B cell (primary cell): ENCODE measurements at regions of chr6 and their contacts with region 1.

Region 1: GRCh38 chr6:53484476-53485280 is 60.2 kb downstream of the GCLC start:
- DNase-seq: peak; percentile 86
- ATAC-seq: peak; percentile 76
- H3K4me3 ChIP-seq: peak overlapping the region in 1 of 5 experiments; percentile 0
- H3K4me3 Mint-ChIP-seq: peak overlapping the region; percentile 13
- H3K27ac ChIP-seq: no peak overlapping the region
- H3K27ac Mint-ChIP-seq: peak overlapping the region; percentile 6
- H3K4me1 ChIP-seq: peaks cover 42 to 46% of the 10 kb centered on the region in 2 donors
- H3K4me1 Mint-ChIP-seq: peaks cover 58% of the 10 kb centered on the region
- H3K27me3 ChIP-seq: peaks cover 0 to 2% (median 0%) of the 10 kb centered on the region in 4 experiments
- H3K27me3 Mint-ChIP-seq: peaks cover 16% of the 10 kb centered on the region
- CTCF ChIP-seq: peak; percentile 99

Region 2: GRCh38 chr6:52995913-52996645 is 488.6 kb before region 1 on chr6:
- CTCF ChIA-PET with region 1: interaction called, 5 read pairs
- POLR2A ChIA-PET with region 1: no interaction called
- intact Hi-C with region 1: loop called (anchors 10 kb)
- DNase-seq: peak; percentile 76
- ATAC-seq: no peak
- H3K4me3 ChIP-seq: peak overlapping the region; percentile 14 to 58 (median 47)
- H3K4me3 Mint-ChIP-seq: peak overlapping the region; percentile 98
- H3K27ac ChIP-seq: peak overlapping the region; percentile 43 to 95
- H3K27ac Mint-ChIP-seq: peak overlapping the region; percentile 100
- H3K4me1 ChIP-seq: peaks cover 8 to 14% of the 10 kb centered on the region in 2 donors
- H3K4me1 Mint-ChIP-seq: peaks cover 23% of the 10 kb centered on the region
- H3K27me3 ChIP-seq: no peaks in the 10 kb centered on the region
- H3K27me3 Mint-ChIP-seq: peaks cover 4% of the 10 kb centered on the region
- CTCF ChIP-seq: no peak

Region 3: DNA sequence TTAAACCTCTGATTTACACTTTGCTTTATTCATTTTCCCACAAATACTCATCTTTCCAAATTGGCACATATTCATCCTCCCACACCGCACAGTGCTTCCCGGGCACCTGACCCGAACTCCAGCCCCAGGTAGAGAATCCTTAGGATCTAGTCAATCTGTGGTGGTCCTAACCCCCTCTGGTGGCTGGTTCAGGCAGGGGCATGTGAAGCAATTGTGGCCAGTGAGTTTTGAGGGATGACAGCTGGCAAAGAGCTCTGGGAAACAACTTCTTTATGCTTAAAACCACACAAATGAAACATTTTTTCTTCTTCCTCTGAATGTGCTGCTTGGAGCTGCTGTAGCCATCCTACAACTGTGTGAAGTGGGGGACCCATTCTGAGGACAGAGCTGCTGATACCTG is 190.6 kb before region 1 on chr6:
- CTCF ChIA-PET with region 1: interaction called, 25 read pairs
- POLR2A ChIA-PET with region 1: no interaction called
- intact Hi-C with region 1: loop called (anchors 1 kb)
- DNase-seq: peak; percentile 60
- ATAC-seq: peak; percentile 39
- H3K4me3 ChIP-seq: no peak overlapping the region
- H3K4me3 Mint-ChIP-seq: no peak overlapping the region
- H3K27ac ChIP-seq: peak overlapping the region; percentile 37 to 81
- H3K27ac Mint-ChIP-seq: peak overlapping the region; percentile 90
- H3K4me1 ChIP-seq: peaks cover 86 to 93% of the 10 kb centered on the region in 2 donors
- H3K4me1 Mint-ChIP-seq: peaks cover 87% of the 10 kb centered on the region
- H3K27me3 ChIP-seq: no peaks in the 10 kb centered on the region
- H3K27me3 Mint-ChIP-seq: no peaks in the 10 kb centered on the region
- CTCF ChIP-seq: peak; percentile 83

Region 4: GRCh38 chr6:53369876-53370515 is 114.7 kb before region 1 on chr6:
- CTCF ChIA-PET with region 1: no interaction called
- POLR2A ChIA-PET with region 1: no interaction called
- intact Hi-C with region 1: no loop called
- DNase-seq: no peak
- ATAC-seq: no peak
- H3K4me3 ChIP-seq: no peak overlapping the region
- H3K4me3 Mint-ChIP-seq: no peak overlapping the region
- H3K27ac ChIP-seq: no peak overlapping the region
- H3K27ac Mint-ChIP-seq: no peak overlapping the region
- H3K4me1 ChIP-seq: no peaks in the 10 kb centered on the region
- H3K4me1 Mint-ChIP-seq: no peaks in the 10 kb centered on the region
- H3K27me3 ChIP-seq: no peaks in the 10 kb centered on the region
- H3K27me3 Mint-ChIP-seq: no peaks in the 10 kb centered on the region
- CTCF ChIP-seq: no peak

Region 5: DNA sequence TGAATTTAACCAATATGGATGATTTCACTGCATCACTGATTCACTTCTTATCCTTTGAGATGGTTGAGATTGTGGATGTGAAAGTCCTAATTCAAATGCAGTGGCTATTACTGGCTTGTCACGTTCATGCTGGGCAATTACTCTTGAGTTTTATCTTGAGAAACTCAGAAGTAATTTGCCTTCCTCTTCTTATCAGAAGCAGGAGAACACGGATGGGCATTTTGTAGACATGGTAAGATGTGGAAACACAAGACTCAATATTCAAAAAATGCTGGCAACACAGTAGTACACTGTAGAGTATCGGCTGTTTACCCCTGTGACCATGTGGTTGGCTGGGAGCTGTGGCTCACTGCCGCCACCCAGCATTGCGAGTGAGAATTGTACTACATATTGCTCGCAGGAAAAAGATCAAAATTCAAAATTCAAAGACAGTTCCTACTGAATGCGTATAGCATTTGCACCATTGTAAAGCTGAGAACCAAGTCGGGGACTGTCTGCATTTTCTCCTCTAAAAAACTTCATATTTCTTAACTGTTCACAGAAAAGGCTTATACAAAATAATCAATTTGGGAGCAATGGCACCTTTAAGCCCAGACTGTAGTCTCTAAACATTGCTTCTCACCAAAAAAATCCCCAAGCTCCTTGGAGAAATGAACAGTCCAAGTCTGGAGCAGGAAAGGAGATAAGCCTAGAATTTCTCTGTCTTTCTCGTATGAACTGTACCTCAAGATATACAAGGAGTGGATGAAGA is 74.0 kb before region 1 on chr6:
- CTCF ChIA-PET with region 1: interaction called, 89 read pairs
- POLR2A ChIA-PET with region 1: no interaction called
- intact Hi-C with region 1: loop called (anchors 1 kb)
- DNase-seq: peak; percentile 77
- ATAC-seq: peak; percentile 98
- H3K4me3 ChIP-seq: peak overlapping the region in 2 of 5 experiments; percentile 7 to 39
- H3K4me3 Mint-ChIP-seq: peak overlapping the region; percentile 74
- H3K27ac ChIP-seq: peak overlapping the region; percentile 7 to 46
- H3K27ac Mint-ChIP-seq: peak overlapping the region; percentile 65
- H3K4me1 ChIP-seq: peaks cover 12 to 15% of the 10 kb centered on the region in 2 donors
- H3K4me1 Mint-ChIP-seq: peaks cover 11% of the 10 kb centered on the region
- H3K27me3 ChIP-seq: no peaks in the 10 kb centered on the region
- H3K27me3 Mint-ChIP-seq: no peaks in the 10 kb centered on the region
- CTCF ChIP-seq: peak; percentile 80

Region 6: GRCh38 chr6:53461041-53461656 is 23.5 kb before region 1 on chr6:
- CTCF ChIA-PET with region 1: interaction called, 70 read pairs
- POLR2A ChIA-PET with region 1: interaction called, 7 read pairs
- intact Hi-C with region 1: loop called (anchors 1 kb)
- DNase-seq: peak; percentile 71
- ATAC-seq: peak; percentile 75
- H3K4me3 ChIP-seq: peak overlapping the region in 3 of 5 experiments; percentile 22 to 45 (median 34)
- H3K4me3 Mint-ChIP-seq: peak overlapping the region; percentile 54
- H3K27ac ChIP-seq: peak overlapping the region; percentile 90 to 93
- H3K27ac Mint-ChIP-seq: peak overlapping the region; percentile 97
- H3K4me1 ChIP-seq: peaks cover 80 to 88% of the 10 kb centered on the region in 2 donors
- H3K4me1 Mint-ChIP-seq: peaks cover 90% of the 10 kb centered on the region
- H3K27me3 ChIP-seq: no peaks in the 10 kb centered on the region
- H3K27me3 Mint-ChIP-seq: no peaks in the 10 kb centered on the region
- CTCF ChIP-seq: no peak

Region 7: GRCh38 chr6:54646069-54646950 is 1161.6 kb after region 1 on chr6:
- CTCF ChIA-PET with region 1: no interaction called
- POLR2A ChIA-PET with region 1: no interaction called
- intact Hi-C with region 1: no loop called
- DNase-seq: no peak
- ATAC-seq: no peak
- H3K4me3 ChIP-seq: no peak overlapping the region
- H3K4me3 Mint-ChIP-seq: no peak overlapping the region
- H3K27ac ChIP-seq: no peak overlapping the region
- H3K27ac Mint-ChIP-seq: no peak overlapping the region
- H3K4me1 ChIP-seq: no peaks in the 10 kb centered on the region
- H3K4me1 Mint-ChIP-seq: no peaks in the 10 kb centered on the region
- H3K27me3 ChIP-seq: no peaks in the 10 kb centered on the region
- H3K27me3 Mint-ChIP-seq: no peaks in the 10 kb centered on the region
- CTCF ChIP-seq: no peak